ENCODE measurements at regions of chr17 and their contacts with region 1.

Region 1: DNA sequence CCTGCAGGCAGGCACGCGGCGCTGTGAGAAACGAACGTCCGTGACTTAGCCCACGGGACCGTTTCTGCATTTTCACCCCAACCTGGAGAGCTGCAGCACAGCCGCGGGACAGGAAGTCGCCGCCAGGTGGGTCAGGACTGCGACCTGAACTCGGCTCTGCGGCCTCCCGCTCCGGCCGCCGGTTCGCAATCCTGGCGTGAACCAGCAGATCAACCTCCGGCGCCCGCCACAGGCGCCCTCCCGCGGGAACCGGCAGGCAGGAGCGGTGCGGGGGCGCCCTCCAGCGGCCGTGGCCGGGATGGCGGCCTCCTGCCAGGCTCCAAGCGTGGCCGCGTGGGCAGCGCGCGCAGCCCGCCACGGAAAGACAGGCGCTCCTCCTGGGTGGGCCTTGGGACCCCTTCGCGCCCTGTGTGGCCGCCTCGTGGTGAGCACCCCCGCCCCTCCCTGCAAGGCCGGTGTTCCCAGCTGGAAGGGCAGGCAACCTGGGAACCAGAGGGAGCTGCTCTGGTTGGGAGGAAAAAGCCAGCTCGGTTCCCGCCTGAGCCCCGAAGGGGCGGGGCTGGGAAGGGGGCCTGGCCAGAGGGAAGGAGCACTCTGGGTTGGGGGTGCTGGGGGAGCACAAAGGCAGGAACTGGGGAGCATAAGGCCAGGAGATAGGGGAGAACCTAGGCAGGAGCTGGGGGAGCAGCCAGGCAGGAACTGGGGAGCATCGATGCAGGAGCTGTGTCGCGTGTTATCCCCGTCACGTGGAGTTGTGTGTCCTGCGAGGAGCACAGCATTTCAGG is 28.2 kb downstream of the ACTG1 start:
- DNase-seq: peak; percentile 36
- H3K4me3 ChIP-seq: peak overlapping the region; percentile 21 to 68 (median 36)
- H3K27ac ChIP-seq: peak overlapping the region in 1 of 4 donors; percentile 5
- H3K4me1 ChIP-seq: peaks cover 46 to 77% (median 47%) of the 10 kb centered on the region in 3 donors
- H3K27me3 ChIP-seq: peaks cover 0 to 39% (median 0%) of the 10 kb centered on the region in 4 donors
- CTCF ChIP-seq: peak; percentile 96 to 100 (median 100)
- POLR2A ChIP-seq: peak in 1 of 4 donors; percentile 4

Region 2: DNA sequence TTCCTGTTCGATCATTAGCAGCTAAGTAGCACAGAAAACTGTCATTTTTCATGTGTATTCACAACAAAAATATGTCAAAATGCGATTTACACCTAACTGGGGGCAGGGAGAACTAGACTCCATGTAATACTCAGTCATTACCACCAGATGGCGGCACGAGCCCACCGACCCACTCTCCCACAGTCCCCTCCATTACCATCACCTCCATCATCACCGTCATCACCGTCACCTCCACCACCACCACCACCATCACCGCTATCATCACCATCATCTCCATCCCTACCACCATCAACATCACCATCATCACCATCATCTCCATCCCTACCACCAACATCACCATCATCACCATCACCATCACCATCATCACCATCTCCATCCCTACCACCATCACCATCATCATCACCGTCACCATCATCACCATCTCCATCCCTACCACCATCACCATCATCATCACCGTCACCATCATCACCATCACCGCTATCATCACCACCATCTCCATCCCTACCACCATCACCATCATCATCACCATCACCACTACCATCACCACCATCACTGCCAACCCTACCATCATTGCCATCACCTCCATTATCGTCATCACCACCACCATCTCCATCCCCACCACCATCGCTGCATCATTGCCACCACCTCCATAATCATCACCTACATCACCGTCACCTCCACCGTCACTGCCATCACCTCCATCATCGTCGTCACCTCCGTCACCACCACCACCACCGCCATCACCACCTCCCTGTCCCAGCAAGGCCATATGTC is 230.8 kb before region 1 on chr17:
- intact Hi-C with region 1: loop called (anchors 5 kb)
- DNase-seq: no peak
- H3K4me3 ChIP-seq: no peak overlapping the region
- H3K27ac ChIP-seq: peak overlapping the region in 1 of 4 donors; percentile 83
- H3K4me1 ChIP-seq: peaks cover 13 to 38% (median 22%) of the 10 kb centered on the region in 3 donors
- H3K27me3 ChIP-seq: no peaks in the 10 kb centered on the region
- CTCF ChIP-seq: peak; percentile 71 to 90 (median 84)
- POLR2A ChIP-seq: no peak

Region 3: DNA sequence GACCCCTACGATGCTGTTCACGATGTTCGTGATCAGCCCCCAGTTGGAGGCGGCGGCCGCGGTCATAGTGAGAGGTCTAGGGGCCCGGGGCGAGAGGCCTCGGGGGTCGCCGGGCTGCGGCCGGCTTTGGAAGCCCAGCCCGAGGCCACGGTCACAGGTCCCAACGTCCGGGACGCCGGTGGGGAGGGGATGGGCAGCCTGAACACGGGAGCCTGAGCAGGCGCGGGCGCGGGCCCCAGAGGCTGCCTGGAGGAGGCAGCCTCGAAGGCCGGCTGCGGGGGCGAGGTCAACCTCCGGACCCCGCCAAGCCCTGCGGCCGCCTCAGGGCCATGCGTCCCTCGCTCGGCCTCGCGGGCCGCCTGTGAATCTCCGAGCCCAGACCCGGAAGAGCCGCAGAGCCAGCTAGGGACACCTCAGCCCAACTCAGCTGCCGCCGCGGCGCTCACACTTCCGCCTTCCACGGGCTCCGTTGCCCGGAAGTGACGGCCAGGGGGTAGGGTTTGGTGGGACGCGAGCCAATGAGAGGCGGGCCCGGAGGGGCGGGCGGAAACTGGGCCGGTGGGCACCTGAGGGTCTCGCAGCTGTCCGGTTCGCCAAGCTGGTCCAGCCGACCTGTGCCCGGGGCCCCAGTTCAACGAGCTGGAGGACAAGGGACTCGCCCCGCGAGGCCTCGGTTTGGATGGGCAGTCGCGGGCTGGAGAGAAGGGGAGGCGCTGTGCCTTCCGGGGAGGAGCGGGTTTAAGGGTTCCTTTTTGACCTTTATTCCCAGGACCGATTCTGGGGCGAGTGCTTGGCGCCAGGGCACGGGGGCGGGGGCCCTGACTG is 189.3 kb before region 1 on chr17 and contains the start of gene SLC38A10:
- intact Hi-C with region 1: loop called (anchors 10 kb)
- DNase-seq: peak; percentile 29
- H3K4me3 ChIP-seq: peak within 1 kb of the TSS; percentile 84 to 98 (median 90)
- H3K27ac ChIP-seq: peak within 1 kb of the TSS; percentile 95 to 98 (median 97)
- H3K4me1 ChIP-seq: peaks cover 16 to 44% (median 35%) of the 10 kb centered on the region in 3 donors
- H3K27me3 ChIP-seq: no peaks in the 10 kb centered on the region
- CTCF ChIP-seq: peak in 2 of 6 experiments; percentile 3 to 34
- POLR2A ChIP-seq: peak in 3 of 4 donors; percentile 91 to 99 (median 93)
- total RNA-seq, gene SLC38A10: 37.8 to 49.8 (median 45.3) TPM

Region 4: GRCh38 chr17:81401723-81402529 is 82.5 kb before region 1 on chr17:
- intact Hi-C with region 1: loop called (anchors 5 kb)
- DNase-seq: no peak
- H3K4me3 ChIP-seq: peak overlapping the region in 3 of 4 donors; percentile 24 to 94 (median 90)
- H3K27ac ChIP-seq: peak overlapping the region; percentile 94 to 98 (median 96)
- H3K4me1 ChIP-seq: peaks cover 23 to 91% (median 55%) of the 10 kb centered on the region in 3 donors
- H3K27me3 ChIP-seq: peaks cover 0 to 17% (median 0%) of the 10 kb centered on the region in 4 donors
- CTCF ChIP-seq: peak in 3 of 6 experiments; percentile 9 to 30 (median 15)
- POLR2A ChIP-seq: no peak

Region 5: DNA sequence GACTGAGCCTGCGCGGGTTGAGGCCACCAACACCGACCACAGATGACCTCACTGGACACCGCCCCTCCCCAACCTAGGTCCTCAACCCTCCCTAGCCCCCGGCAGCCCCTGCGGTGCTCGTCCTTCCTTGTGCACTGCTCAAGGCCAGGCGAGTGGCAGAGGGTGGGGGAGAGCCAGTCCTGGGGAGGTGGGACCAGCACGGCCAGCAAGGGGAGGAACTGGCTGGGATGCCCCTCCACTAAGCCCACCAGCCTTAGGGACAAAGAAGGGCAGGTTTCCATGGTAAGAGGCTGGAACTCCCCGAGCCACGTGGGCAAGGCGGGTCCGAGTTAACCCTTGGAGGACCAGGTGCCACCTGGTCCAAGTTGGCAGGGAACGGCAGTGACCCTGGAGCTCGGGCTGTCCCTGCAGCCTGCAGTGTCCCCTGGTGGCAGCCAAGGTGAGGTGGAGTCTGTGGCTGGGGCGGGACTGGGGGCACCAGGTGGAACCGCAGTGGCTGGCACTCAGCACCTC is 53.0 kb after region 1 on chr17:
- intact Hi-C with region 1: no loop called
- DNase-seq: no peak
- H3K4me3 ChIP-seq: no peak overlapping the region
- H3K27ac ChIP-seq: no peak overlapping the region
- H3K4me1 ChIP-seq: peaks cover 6 to 17% (median 15%) of the 10 kb centered on the region in 3 donors
- H3K27me3 ChIP-seq: peaks cover 5 to 55% (median 10%) of the 10 kb centered on the region in 4 donors
- CTCF ChIP-seq: peak; percentile 32 to 73 (median 62)
- POLR2A ChIP-seq: no peak

Region 6: DNA sequence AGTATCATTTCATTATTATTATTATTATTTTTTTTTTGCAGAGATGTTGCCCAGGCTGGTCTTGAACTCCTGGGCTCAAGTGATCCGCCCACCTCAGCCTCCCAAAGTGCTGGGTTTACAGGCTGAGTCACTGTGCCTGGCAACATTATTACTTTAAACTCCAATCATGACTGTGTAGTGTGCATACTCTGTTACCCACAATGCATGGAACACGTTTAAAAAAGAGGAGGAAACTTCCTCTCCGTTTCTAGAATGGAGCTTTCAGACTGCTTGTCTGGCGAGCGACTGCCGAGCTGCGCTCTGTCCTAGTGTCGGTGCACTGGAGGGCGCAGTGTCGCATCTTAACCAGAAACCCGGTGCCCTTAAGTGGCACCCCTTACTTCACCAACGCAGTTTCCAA is 635.8 kb after region 1 on chr17:
- intact Hi-C with region 1: no loop called
- DNase-seq: no peak
- H3K4me3 ChIP-seq: no peak overlapping the region
- H3K27ac ChIP-seq: no peak overlapping the region
- H3K4me1 ChIP-seq: no peaks in the 10 kb centered on the region
- H3K27me3 ChIP-seq: no peaks in the 10 kb centered on the region
- CTCF ChIP-seq: no peak
- POLR2A ChIP-seq: no peak

Measured in esophagus squamous epithelium (tissue), 5 donors.